A673 (cell line): ENCODE measurements at regions of chr11 and their contacts with region 1.

Region 1: DNA sequence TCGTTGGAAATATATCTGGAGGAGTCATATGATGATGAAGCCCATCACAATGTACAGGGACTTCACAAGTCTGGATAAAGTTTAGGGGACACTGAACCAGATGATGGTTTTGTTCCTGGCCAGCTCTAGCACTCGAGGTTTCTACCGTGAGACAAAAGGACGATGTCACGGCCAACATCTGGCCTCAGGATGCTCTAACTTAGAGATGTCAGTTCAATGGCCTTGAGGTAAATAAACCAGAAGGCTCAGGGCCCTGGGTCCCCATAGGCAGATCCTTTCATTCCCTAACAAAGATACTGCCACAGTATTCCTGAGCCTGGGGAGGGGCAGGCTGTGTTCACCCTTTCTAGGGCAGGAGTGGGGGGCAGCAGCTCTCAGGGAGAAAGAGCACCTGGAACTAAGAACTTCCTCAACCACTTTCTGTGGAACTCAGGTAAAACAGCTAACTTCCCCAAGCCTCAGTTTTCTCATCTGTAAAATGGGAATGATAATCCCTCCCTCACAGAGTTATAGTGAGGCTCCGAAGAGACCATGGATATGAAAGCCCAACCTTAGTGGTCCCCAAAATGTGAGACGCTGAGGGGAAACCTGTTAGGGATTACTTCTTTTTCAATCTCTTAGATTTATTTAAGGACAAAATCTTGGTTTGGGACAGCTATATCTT is 18.3 kb downstream of the MS4A10 start:
- DNase-seq: no peak
- H3K4me3 ChIP-seq: no peak overlapping the region
- H3K27ac ChIP-seq: no peak overlapping the region
- H3K4me1 ChIP-seq: no peaks in the 10 kb centered on the region
- H3K27me3 ChIP-seq: peaks cover 17% of the 10 kb centered on the region
- CTCF ChIP-seq: no peak

Region 2: DNA sequence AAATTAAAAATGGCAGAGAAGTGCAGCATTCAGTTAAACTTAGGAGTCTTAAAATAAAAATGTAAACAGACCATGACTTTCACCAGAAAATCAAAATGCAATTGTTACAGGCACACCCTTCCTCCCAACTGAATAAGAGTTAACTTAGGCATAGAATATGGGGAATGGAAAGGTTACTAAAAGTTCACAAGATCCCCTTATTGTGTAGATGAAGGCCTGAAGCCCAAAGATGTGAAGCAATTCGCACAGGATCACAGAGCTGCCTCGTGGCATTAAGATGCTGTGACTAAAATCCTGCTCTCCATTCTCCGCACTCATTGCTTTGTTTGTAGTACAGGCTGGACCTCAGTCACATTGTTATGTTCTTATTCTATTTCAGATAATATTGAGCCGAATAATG is 370.0 kb before region 1 on chr11:
- CTCF ChIA-PET with region 1: no interaction called
- POLR2A ChIA-PET with region 1: no interaction called
- intact Hi-C with region 1: no loop called
- DNase-seq: no peak
- H3K4me3 ChIP-seq: no peak overlapping the region
- H3K27ac ChIP-seq: no peak overlapping the region
- H3K4me1 ChIP-seq: no peaks in the 10 kb centered on the region
- H3K27me3 ChIP-seq: peaks cover 16% of the 10 kb centered on the region
- CTCF ChIP-seq: no peak

Region 3: GRCh38 chr11:60485986-60486385 is 317.4 kb before region 1 on chr11:
- CTCF ChIA-PET with region 1: no interaction called
- POLR2A ChIA-PET with region 1: no interaction called
- intact Hi-C with region 1: no loop called
- DNase-seq: peak; percentile 69
- H3K4me3 ChIP-seq: no peak overlapping the region
- H3K27ac ChIP-seq: no peak overlapping the region
- H3K4me1 ChIP-seq: no peaks in the 10 kb centered on the region
- H3K27me3 ChIP-seq: peaks cover 4% of the 10 kb centered on the region
- CTCF ChIP-seq: peak; percentile 72

Region 4: GRCh38 chr11:60691661-60692060 is 111.7 kb before region 1 on chr11:
- CTCF ChIA-PET with region 1: no interaction called
- POLR2A ChIA-PET with region 1: interaction called, 18 read pairs
- intact Hi-C with region 1: no loop called
- DNase-seq: no peak
- H3K4me3 ChIP-seq: no peak overlapping the region
- H3K27ac ChIP-seq: no peak overlapping the region
- H3K4me1 ChIP-seq: no peaks in the 10 kb centered on the region
- H3K27me3 ChIP-seq: no peaks in the 10 kb centered on the region
- CTCF ChIP-seq: no peak